ENCODE measurements at regions of chr13 and their contacts with region 1.

Region 1: GRCh38 chr13:22964245-22964966 is 216.4 kb upstream of the SGCG start:
- DNase-seq: no peak
- H3K4me3 ChIP-seq: no peak overlapping the region
- H3K27ac ChIP-seq: no peak overlapping the region
- H3K4me1 ChIP-seq: no peaks in the 10 kb centered on the region
- H3K27me3 ChIP-seq: no peaks in the 10 kb centered on the region
- CTCF ChIP-seq: no peak
- EP300 ChIP-seq: no peak
- POLR2A ChIP-seq: no peak

Region 2: DNA sequence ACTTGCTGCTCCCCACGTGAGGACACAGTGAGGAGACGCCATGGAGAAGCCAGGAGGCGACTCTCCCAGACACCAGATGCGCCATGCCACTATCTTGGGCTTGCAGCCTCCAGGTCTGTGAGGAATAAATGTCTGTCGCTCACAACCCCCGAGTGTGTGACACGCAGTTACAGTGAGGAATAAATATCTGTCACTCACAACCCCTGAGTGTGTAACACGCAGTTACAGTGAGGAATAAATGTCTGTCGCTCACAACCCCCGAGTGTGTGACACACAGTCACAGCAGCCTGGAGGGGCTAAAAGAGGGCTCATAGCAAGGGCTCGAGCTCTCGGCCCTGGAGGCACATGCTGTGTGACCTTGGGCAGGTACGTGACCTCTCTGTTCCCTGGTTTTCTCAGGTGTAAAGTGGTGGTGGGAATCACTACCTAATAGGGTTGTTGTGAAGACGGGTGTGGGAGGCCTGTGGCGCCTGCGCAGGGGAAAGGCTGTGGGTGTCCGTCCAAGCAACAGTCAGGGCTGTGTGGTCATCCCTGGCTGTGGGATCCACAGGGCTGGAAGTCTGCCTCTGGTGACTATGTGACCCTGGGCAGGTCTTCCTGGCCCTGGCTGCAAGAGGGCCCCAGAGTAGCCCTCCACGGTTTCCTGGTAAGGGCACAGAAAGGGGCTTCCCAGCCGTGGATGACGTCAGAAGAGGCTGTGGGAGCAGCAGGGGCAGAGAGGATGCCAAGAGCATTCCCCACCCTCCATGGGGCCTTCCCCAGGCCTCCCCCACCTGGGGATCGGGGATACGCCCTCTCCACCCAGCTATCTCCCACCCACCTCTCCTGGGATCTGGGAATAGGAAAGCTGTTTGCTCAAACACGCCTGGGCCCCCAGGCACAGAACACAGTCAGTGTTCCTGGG is 1422.7 kb after region 1 on chr13:
- intact Hi-C with region 1: loop called in 1 of 4 experiments (anchors 5 kb)
- DNase-seq: no peak
- H3K4me3 ChIP-seq: no peak overlapping the region
- H3K27ac ChIP-seq: no peak overlapping the region
- H3K4me1 ChIP-seq: no peaks in the 10 kb centered on the region
- H3K27me3 ChIP-seq: no peaks in the 10 kb centered on the region
- CTCF ChIP-seq: no peak
- EP300 ChIP-seq: no peak
- POLR2A ChIP-seq: no peak

Measured in ovary (tissue), 10 donors.